ENCODE measurements at regions of chr22 and their contacts with region 1.

Region 1: DNA sequence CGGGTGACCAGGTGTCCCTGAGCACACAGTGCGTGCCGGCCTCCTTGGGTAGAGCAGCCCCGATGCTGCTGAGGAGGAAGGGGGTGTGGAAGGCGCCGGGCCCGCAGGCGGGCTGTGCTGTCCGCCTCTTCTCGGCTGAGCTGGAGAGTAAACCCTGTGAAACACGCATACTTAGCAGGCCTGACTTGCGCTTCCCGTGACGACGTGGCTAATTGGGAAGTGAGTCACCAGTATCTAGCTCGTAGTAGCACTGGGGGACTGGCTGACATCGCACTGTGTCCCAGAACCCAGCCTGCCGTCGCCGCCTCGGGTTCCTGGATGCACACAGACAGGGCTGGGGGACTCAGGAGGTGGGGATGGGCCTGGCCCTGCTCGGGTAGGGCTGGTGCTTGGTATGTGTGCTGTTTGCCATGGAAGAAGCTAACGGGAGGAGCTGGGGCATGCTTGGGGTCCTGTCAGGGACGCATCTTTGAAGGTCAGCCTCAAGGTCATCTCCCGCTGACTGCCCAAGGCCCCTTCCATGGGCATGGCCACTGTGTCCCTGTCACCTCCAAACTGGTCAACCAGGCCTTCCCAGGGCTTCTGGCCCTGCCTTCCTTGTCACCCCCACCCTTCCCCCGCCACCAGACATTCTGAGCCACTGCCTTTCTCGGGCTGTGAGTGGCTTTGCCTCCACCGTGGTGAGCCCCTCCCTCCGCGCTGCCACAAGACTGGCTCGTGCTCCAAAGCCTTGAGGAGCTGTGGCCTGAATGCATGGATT is 1327.0 kb downstream of the BRD1 start:
- DNase-seq: no peak
- ATAC-seq: no peak
- H3K4me3 ChIP-seq: no peak overlapping the region
- H3K4me3 Mint-ChIP-seq: no peak overlapping the region
- H3K27ac ChIP-seq: no peak overlapping the region
- H3K27ac Mint-ChIP-seq: no peak overlapping the region
- H3K4me1 ChIP-seq: no peaks in the 10 kb centered on the region
- H3K4me1 Mint-ChIP-seq: no peaks in the 10 kb centered on the region
- H3K27me3 ChIP-seq: no peaks in the 10 kb centered on the region
- H3K27me3 Mint-ChIP-seq: peaks cover 3% of the 10 kb centered on the region
- CTCF ChIP-seq: no peak

Region 2: GRCh38 chr22:48444320-48445112 is 56.1 kb before region 1 on chr22:
- CTCF ChIA-PET with region 1: no interaction called
- POLR2A ChIA-PET with region 1: no interaction called
- intact Hi-C with region 1: loop called in 1 of 2 experiments (anchors 10 kb)
- DNase-seq: no peak
- ATAC-seq: no peak
- H3K4me3 ChIP-seq: no peak overlapping the region
- H3K4me3 Mint-ChIP-seq: no peak overlapping the region
- H3K27ac ChIP-seq: no peak overlapping the region
- H3K27ac Mint-ChIP-seq: no peak overlapping the region
- H3K4me1 ChIP-seq: no peaks in the 10 kb centered on the region
- H3K4me1 Mint-ChIP-seq: no peaks in the 10 kb centered on the region
- H3K27me3 ChIP-seq: peaks cover 0 to 3% of the 10 kb centered on the region in 2 experiments
- H3K27me3 Mint-ChIP-seq: no peaks in the 10 kb centered on the region
- CTCF ChIP-seq: no peak

Region 3: DNA sequence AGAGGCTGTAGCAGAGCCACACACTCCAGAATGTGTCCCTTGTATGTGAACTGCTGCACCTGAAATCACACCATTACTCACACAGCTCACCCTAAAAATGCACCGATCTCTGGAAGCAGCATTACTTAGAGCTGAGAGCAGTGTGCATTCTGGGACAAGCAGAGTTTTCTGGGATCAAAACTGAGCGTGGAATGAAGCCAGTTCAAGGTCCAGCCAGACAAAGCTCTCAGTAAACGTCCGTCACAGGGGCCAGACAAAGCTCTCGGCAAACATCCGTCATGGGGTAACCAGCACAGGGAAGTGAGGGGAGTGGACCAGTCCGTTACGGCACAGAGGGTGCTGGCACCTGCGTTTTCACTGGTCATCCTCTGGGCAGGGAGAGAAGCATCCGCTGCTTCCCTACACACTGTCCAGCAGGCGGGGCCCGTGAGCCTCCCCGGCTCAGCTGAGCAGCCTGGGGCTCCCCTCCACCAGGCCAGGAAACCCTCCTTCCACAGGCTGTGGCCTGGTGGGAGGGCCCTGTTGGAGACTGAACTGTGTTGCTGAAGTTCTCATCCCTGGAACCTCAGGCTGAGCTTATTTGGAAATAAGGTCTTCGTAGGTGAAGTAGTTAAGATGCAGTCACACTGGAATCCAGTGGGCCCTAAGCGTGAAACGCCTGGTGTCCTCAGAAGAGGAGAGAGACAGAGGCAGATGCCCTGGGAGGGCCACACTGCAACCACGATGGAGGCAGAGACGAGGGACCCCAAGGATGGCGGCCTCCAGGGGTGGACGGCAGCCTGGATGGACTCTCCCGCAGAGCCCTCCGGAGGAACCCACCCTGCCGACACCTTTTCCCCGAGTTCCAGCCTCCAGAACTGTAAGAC is 443.1 kb after region 1 on chr22:
- CTCF ChIA-PET with region 1: no interaction called
- POLR2A ChIA-PET with region 1: no interaction called
- intact Hi-C with region 1: no loop called
- DNase-seq: peak in 3 of 14 experiments; percentile 8 to 21 (median 8)
- ATAC-seq: no peak
- H3K4me3 ChIP-seq: no peak overlapping the region
- H3K4me3 Mint-ChIP-seq: no peak overlapping the region
- H3K27ac ChIP-seq: no peak overlapping the region
- H3K27ac Mint-ChIP-seq: no peak overlapping the region
- H3K4me1 ChIP-seq: no peaks in the 10 kb centered on the region
- H3K4me1 Mint-ChIP-seq: no peaks in the 10 kb centered on the region
- H3K27me3 ChIP-seq: no peaks in the 10 kb centered on the region
- H3K27me3 Mint-ChIP-seq: peaks cover 9% of the 10 kb centered on the region
- CTCF ChIP-seq: no peak

Measured in CD4-positive, alpha-beta T cell (primary cell).